ENCODE measurements at regions of chrX and their contacts with region 1.

Region 1: DNA sequence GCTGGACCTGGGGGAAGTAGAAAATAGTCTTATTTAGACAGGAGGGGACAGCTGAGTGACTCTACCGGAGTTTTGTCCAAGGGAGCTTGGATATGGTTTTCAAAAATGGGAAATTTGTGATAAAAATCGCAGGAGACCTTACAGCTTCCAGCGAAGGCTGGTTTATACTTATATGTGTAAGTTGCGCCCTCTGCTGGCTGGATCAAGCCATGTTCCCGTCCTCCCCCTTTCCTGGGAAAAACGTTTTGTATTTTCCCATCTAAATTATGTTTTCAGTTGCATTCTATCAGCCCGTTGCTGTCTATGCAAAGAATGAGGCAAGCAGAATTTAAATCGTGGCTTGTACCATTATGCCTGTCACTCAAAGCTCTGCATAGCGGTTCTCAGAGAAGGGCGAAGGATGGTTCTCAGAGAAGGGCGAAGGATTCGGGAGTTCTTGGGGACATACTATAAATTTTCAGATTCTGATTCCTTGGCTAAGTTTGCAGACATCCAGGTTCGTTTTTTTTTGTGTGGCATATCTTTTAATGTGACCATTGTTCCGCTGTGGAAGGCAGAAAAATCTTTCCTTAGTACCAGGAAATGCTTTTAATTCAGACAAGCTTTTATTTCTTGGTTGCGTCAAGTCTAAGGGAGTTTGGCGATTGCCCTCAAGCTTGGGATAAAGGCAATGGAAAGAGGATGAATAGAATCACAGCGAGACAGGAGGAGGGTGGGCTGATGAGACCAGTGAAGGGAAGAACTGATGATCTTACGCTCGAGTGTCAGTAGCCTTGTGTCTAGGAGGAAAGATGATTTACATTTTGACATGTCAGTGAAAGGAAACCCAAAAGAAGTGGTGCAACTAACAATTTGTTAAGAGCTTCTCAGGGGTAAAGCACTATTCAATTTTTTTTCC is 128.5 kb upstream of the ARX start:
- DNase-seq: no peak
- ATAC-seq: peak; percentile 69
- H3K4me3 ChIP-seq: no peak overlapping the region
- H3K27ac ChIP-seq: no peak overlapping the region
- H3K4me1 ChIP-seq: no peaks in the 10 kb centered on the region
- H3K27me3 ChIP-seq: no peaks in the 10 kb centered on the region
- CTCF ChIP-seq: peak; percentile 71 to 76 (median 72)
- EP300 ChIP-seq: no peak
- POLR2A ChIP-seq: no peak
- RAD21 ChIP-seq: peak; percentile 72

Region 2: DNA sequence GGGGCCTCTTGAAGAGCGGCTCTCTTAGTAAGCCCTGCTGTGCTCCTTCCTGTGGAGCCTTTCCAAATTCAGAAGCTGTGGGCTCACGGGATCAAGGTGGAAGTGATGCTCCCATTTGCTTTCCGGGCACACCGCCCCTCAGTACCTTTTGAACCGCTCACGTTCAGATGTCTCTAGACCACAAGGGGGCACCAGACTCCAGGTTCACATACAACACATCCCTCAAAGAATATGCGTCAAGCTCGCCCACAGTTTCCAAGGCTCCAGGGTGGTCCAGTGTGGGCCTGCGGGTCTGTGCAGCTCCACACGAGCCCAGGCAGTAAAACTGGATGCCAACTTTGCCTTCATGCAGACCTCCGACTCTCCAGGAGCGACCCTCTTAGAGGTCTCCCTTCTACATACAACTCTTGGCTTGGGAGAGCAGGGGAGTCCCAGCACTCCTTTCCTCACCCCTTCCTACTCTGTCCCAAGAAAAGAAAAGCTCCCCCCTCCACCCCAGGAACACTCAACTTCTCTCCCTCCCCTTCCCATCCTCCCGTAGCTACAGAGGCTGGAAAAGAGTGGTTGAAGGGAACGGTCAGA is 772.8 kb before region 1 on chrX:
- CTCF ChIA-PET with region 1: interaction called, 6 read pairs
- POLR2A ChIA-PET with region 1: no interaction called
- RAD21 ChIA-PET with region 1: no interaction called
- SMC1A ChIA-PET with region 1: interaction called, 6 read pairs
- in situ Hi-C with region 1: loop called (anchors 10 kb)
- intact Hi-C with region 1: loop called (anchors 5 kb)
- DNase-seq: peak; percentile 8
- ATAC-seq: peak; percentile 97
- H3K4me3 ChIP-seq: no peak overlapping the region
- H3K27ac ChIP-seq: no peak overlapping the region
- H3K4me1 ChIP-seq: no peaks in the 10 kb centered on the region
- H3K27me3 ChIP-seq: peaks cover 0 to 2% of the 10 kb centered on the region in 2 experiments; a peak in 1 of 4 replicates
- CTCF ChIP-seq: peak; percentile 72 to 79 (median 73)
- EP300 ChIP-seq: no peak
- POLR2A ChIP-seq: no peak
- RAD21 ChIP-seq: peak; percentile 70

Region 3: DNA sequence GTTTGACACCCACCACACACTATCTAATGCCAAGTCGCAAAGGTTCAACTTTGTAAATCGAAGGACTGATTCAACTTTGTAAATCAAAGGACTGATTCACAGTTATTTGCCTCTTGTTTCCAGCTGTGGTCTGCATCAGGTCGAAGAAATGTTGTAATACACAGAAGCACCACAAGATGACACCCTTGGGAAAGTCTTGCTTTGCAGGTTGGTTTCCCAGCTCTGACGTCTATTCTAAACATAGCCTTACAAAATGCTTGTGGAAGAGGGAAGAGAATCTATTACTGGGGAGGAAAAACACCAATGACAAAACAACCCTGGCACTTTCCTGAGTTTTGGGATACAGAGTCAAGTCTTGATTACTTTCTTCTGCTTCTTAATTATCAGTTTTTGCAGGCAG is 748.5 kb before region 1 on chrX:
- CTCF ChIA-PET with region 1: interaction called, 18 read pairs
- POLR2A ChIA-PET with region 1: no interaction called
- RAD21 ChIA-PET with region 1: interaction called, 5 read pairs
- SMC1A ChIA-PET with region 1: interaction called, 4 read pairs
- in situ Hi-C with region 1: no loop called
- intact Hi-C with region 1: no loop called
- DNase-seq: peak; percentile 51
- ATAC-seq: peak; percentile 94
- H3K4me3 ChIP-seq: no peak overlapping the region
- H3K27ac ChIP-seq: no peak overlapping the region
- H3K4me1 ChIP-seq: no peaks in the 10 kb centered on the region
- H3K27me3 ChIP-seq: no peaks in the 10 kb centered on the region
- CTCF ChIP-seq: peak; percentile 77 to 91 (median 85)
- EP300 ChIP-seq: no peak
- POLR2A ChIP-seq: no peak
- RAD21 ChIP-seq: peak; percentile 98

Region 4: GRCh38 chrX:24748202-24748843 is 396.0 kb before region 1 on chrX:
- CTCF ChIA-PET with region 1: interaction called, 33 read pairs
- POLR2A ChIA-PET with region 1: no interaction called
- RAD21 ChIA-PET with region 1: interaction called, 12 read pairs
- SMC1A ChIA-PET with region 1: interaction called, 11 read pairs
- in situ Hi-C with region 1: loop called (anchors 5 kb)
- intact Hi-C with region 1: loop called (anchors 1 kb)
- DNase-seq: no peak
- ATAC-seq: no peak
- H3K4me3 ChIP-seq: no peak overlapping the region
- H3K27ac ChIP-seq: no peak overlapping the region
- H3K4me1 ChIP-seq: no peaks in the 10 kb centered on the region
- H3K27me3 ChIP-seq: no peaks in the 10 kb centered on the region
- CTCF ChIP-seq: no peak
- EP300 ChIP-seq: no peak
- POLR2A ChIP-seq: no peak
- RAD21 ChIP-seq: no peak

Region 5: GRCh38 chrX:24759786-24760185 is 384.5 kb before region 1 on chrX:
- CTCF ChIA-PET with region 1: interaction called, 3 read pairs
- POLR2A ChIA-PET with region 1: no interaction called
- RAD21 ChIA-PET with region 1: no interaction called
- SMC1A ChIA-PET with region 1: no interaction called
- in situ Hi-C with region 1: loop called (anchors 5 kb)
- intact Hi-C with region 1: no loop called
- DNase-seq: no peak
- ATAC-seq: no peak
- H3K4me3 ChIP-seq: no peak overlapping the region
- H3K27ac ChIP-seq: no peak overlapping the region
- H3K4me1 ChIP-seq: no peaks in the 10 kb centered on the region
- H3K27me3 ChIP-seq: no peaks in the 10 kb centered on the region
- CTCF ChIP-seq: no peak
- EP300 ChIP-seq: no peak
- POLR2A ChIP-seq: no peak
- RAD21 ChIP-seq: no peak

Region 6: GRCh38 chrX:25020905-25021449 is 123.3 kb before region 1 on chrX:
- CTCF ChIA-PET with region 1: interaction called, 6 read pairs
- POLR2A ChIA-PET with region 1: no interaction called
- RAD21 ChIA-PET with region 1: interaction called, 3 read pairs
- SMC1A ChIA-PET with region 1: no interaction called
- in situ Hi-C with region 1: no loop called
- intact Hi-C with region 1: loop called (anchors 5 kb)
- DNase-seq: no peak
- ATAC-seq: peak; percentile 86
- H3K4me3 ChIP-seq: no peak overlapping the region
- H3K27ac ChIP-seq: no peak overlapping the region
- H3K4me1 ChIP-seq: no peaks in the 10 kb centered on the region
- H3K27me3 ChIP-seq: peaks cover 5 to 13% of the 10 kb centered on the region in 2 experiments
- CTCF ChIP-seq: peak; percentile 58 to 74 (median 59)
- EP300 ChIP-seq: no peak
- POLR2A ChIP-seq: no peak
- RAD21 ChIP-seq: peak; percentile 63

Region 7: GRCh38 chrX:25131055-25131454 is 13.2 kb before region 1 on chrX:
- CTCF ChIA-PET with region 1: interaction called, 26 read pairs
- POLR2A ChIA-PET with region 1: no interaction called
- RAD21 ChIA-PET with region 1: no interaction called
- SMC1A ChIA-PET with region 1: no interaction called
- in situ Hi-C with region 1: no loop called
- intact Hi-C with region 1: no loop called
- DNase-seq: no peak
- ATAC-seq: no peak
- H3K4me3 ChIP-seq: no peak overlapping the region
- H3K27ac ChIP-seq: no peak overlapping the region
- H3K4me1 ChIP-seq: no peaks in the 10 kb centered on the region
- H3K27me3 ChIP-seq: no peaks in the 10 kb centered on the region
- CTCF ChIP-seq: no peak
- EP300 ChIP-seq: no peak
- POLR2A ChIP-seq: no peak
- RAD21 ChIP-seq: no peak